Mammary epithelial cell (primary cell): ENCODE measurements at regions of chr17 and their contacts with region 1.

Region 1: DNA sequence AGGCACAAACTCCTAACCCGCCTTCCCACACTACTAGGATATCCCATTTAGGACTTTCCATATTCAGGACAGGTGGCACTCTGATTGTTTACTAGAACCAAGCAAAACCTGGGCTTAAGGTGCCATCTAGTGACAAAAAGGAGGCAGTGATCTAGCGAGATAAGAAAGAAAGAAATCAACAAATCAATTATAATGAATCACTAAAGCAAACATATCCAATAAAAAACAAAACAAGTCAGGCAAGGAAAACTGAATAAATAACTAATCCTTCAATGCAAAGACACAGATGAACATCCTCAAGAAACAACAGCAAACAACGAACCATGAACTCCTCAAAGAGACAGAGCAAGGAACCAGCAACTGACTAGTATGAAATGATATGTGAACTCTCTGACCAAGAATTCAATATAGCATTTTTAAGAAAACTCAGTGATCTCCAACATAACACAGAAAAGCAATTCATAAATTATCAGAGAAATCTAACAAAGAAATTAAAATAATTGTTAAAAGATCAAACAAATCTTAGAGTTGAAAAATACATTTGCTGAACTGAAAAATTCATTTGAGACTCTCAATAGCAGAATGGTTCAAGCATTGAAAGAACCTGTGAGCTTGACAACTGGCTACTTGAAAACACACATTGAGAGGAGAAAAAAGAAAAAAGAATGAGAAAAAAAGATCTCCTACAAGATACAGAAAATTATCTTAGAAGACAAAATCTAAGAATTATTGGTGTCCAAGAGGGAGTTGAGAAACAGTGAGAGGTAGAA is 203.7 kb downstream of the CEP112 start:
- DNase-seq: peak; percentile 39
- H3K4me3 ChIP-seq: no peak overlapping the region
- H3K27ac ChIP-seq: no peak overlapping the region
- H3K4me1 ChIP-seq: no peaks in the 10 kb centered on the region
- H3K27me3 ChIP-seq: no peaks in the 10 kb centered on the region
- CTCF ChIP-seq: peak; percentile 58 to 74

Region 2: DNA sequence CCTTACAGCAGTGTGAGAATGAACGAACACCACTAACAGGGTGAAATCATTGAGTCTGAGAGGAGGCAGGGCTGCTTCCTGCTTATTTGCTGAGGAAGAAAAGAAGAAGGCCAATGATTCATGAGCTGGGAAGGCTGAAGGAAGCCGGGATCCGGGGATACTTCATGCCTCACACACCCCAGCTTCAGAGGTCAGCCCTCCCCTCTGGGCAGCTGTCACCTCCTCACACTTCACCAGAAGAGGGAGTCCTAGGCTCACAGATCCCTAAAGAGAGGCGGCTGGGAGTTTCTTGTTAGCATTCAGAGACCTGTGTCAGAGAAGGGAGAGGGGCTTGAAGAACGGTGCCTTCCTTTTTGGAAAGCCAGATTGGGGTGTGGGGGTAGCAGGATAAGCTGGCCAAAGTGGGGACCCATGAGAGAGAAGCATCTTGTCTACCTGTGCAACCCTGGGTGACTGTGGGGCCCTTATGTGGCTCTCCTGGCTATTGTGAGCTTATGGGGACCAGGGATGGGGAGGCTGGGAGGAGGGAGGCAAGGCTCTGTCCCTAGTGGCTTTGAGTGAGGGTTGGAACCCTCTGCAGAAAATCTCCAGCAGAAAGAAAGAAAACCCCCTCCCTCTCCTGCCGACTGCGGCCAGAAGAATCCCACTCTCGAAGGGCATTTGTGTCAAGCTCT is 756.5 kb before region 1 on chr17:
- CTCF ChIA-PET with region 1: interaction called, 8 read pairs
- dilution Hi-C with region 1: no loop called
- in situ Hi-C with region 1: loop called in 1 of 2 experiments (anchors 5 kb)
- intact Hi-C with region 1: loop called (anchors 1 kb)
- DNase-seq: peak; percentile 72
- H3K4me3 ChIP-seq: no peak overlapping the region
- H3K27ac ChIP-seq: no peak overlapping the region
- H3K4me1 ChIP-seq: no peaks in the 10 kb centered on the region
- H3K27me3 ChIP-seq: no peaks in the 10 kb centered on the region
- CTCF ChIP-seq: peak; percentile 76 to 86

Region 3: DNA sequence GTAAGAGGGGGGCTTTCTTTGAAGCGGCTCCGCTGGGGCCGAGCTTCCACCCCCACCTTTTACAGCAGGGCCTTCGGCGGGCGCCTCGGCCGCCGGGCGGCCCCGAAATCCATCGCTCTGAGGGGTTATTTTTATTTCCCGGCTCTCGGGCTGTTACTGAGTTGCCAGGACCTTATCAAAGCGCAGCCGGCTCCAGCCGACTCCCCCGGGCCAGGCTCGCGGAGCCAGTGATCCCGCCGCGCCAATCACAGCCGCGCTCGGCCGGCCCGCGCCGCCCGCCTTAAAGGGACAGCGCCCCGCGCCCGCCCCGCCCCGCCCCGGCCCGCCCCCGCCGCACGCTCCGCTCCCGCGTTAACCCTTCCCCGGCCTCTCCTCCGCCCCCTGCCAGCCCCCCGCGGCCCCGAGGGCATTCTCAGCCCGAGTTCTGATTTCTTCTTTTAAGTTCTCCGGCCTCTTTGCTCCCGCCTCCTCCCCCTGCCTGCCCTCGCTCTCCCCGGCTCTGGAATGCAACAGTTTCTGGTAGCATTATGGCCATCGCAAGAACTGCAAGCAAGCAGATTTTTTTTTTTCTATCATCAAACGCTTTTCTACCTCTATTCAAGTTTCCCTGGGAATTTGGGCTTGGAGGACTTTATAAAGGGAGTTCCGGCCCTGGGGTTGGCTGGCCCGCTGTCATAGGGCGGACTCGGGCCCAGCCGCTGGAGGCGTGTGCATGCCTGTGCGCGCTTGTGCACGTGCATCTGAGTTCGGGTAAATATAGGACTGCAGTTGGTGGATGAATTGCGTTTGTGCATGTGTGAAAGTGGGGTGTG is 426.7 kb before region 1 on chr17 and contains the start of gene AXIN2:
- CTCF ChIA-PET with region 1: no interaction called
- dilution Hi-C with region 1: no loop called
- in situ Hi-C with region 1: no loop called
- intact Hi-C with region 1: loop called (anchors 5 kb)
- DNase-seq: peak; percentile 80
- H3K4me3 ChIP-seq: peak within 1 kb of the TSS; percentile 51 to 70 (median 54)
- H3K27ac ChIP-seq: no peak within 1 kb of the TSS
- H3K4me1 ChIP-seq: peaks cover 10% of the 10 kb centered on the region
- H3K27me3 ChIP-seq: peaks cover 21% of the 10 kb centered on the region
- CTCF ChIP-seq: peak; percentile 8 to 13
- total RNA-seq, gene AXIN2: 0.14 to 0.67 TPM

Region 4: DNA sequence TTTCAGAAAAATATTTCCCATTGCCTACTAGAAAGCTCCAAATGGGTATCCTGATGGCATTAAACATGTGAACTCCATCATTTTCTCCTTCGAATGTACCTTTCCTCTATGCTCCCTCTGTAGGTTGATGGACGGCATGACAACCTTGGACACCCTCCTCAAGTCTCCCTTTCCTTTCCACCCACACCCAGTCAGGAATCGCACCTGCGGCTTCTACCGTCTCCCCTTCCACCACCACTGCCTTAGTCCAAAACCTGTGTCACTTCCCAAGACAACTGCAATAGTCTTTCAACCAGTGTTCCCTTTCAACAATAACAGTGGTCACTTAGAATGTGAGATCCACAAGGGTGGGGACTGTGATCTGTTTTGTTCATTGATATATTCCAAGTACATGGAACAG is 193.7 kb before region 1 on chr17:
- CTCF ChIA-PET with region 1: no interaction called
- dilution Hi-C with region 1: no loop called
- in situ Hi-C with region 1: no loop called
- intact Hi-C with region 1: loop called (anchors 10 kb)
- DNase-seq: peak; percentile 29
- H3K4me3 ChIP-seq: no peak overlapping the region
- H3K27ac ChIP-seq: no peak overlapping the region
- H3K4me1 ChIP-seq: no peaks in the 10 kb centered on the region
- H3K27me3 ChIP-seq: no peaks in the 10 kb centered on the region
- CTCF ChIP-seq: peak; percentile 46 to 75

Region 5: DNA sequence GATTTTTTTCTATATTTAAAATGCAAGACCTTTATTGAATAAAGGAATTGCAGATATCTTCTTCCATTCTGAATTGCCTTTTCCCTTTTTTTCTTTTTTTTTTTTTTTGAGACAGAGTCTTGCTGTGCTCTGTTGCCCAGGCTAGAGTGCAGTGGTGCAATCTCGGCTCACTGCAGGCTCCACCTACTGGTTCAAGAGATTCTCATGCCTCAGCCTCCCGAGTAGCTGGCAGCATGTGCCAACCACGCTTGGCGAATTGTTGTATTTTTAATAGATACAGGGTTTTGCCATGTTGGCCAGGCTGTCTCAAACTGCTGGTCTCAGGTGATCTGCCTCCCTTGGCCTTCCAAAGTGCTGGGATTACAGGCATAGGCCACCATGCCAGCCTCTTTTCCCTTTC is 52.1 kb after region 1 on chr17:
- CTCF ChIA-PET with region 1: no interaction called
- dilution Hi-C with region 1: loop called (anchors 5 kb)
- in situ Hi-C with region 1: no loop called
- intact Hi-C with region 1: no loop called
- DNase-seq: no peak
- H3K4me3 ChIP-seq: no peak overlapping the region
- H3K27ac ChIP-seq: no peak overlapping the region
- H3K4me1 ChIP-seq: no peaks in the 10 kb centered on the region
- H3K27me3 ChIP-seq: no peaks in the 10 kb centered on the region
- CTCF ChIP-seq: peak in 1 of 2 donors; percentile 5